CD4-positive, alpha-beta memory T cell (primary cell): ENCODE measurements at regions of chr3 and their contacts with region 1.

Region 1: DNA sequence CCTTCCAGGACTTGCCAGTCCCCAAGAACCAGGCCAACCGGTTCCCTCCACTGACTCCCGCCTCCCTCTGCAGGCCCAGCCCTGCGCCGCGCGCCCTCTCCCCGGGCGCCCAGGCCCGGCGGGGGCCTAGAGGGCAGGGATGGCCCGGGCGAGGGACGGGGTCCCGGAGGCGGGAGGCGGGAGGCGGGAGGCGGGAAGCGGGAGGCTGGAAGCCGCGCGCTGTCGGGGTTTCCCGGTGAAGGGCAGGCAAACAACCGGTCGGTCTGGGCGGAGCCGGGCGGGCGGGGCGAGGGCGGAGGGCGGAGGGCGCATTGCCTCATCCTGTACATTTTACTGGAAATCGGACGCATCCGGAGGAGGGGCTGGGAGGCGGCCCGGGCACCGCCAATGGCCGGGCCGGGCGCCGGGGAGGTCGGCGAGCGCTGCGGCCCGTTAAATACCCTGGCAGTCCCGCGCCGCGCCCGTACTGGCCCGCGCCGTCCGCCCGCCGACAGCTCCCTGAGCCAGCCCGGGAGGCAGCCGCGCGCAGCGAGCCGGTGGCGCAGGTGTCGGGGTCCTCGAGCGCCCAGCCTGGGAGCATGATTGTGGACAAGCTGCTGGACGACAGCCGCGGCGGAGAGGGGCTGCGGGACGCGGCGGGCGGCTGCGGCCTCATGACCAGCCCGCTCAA is at the start of gene NFKBIZ:
- DNase-seq: peak; percentile 89 to 96 (median 91)
- H3K4me3 ChIP-seq: peak within 1 kb of the TSS; percentile 70 to 100
- H3K4me3 Mint-ChIP-seq: peak within 1 kb of the TSS; percentile 93 to 100 (median 98)
- H3K27ac ChIP-seq: peak within 1 kb of the TSS; percentile 99
- H3K27ac Mint-ChIP-seq: peak within 1 kb of the TSS; percentile 97 to 100 (median 99)
- H3K4me1 ChIP-seq: peaks cover 33% of the 10 kb centered on the region
- H3K4me1 Mint-ChIP-seq: peaks cover 26 to 56% (median 35%) of the 10 kb centered on the region in 4 donors
- H3K27me3 ChIP-seq: no peaks in the 10 kb centered on the region
- H3K27me3 Mint-ChIP-seq: no peaks in the 10 kb centered on the region
- total RNA-seq, gene NFKBIZ: 75.9 to 79.5 TPM

Region 2: DNA sequence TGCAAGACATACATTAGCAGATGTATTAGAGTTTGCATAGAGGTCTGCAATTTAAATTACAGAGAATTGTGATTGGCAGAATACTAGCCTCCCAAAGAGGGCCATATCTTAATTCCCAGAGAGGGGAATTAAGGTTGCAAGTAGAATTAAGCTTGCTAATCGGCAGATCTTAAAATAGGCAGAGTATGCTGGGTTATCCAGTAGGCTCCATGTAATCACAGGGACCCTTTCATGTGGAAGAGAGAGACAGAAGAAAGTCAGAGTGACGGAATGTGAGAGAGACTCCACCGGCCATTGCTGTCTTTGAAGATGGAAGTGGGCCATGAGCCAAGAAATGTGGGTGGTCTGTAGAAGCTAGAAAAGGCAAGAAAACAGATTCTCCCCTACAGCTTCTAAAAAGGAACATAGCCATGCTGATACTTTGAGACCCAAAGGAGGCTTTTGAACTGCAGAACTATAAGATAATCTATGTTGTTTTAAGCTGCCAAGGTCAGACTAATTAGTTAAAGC is 567.6 kb before region 1 on chr3:
- CTCF ChIA-PET with region 1: no interaction called
- POLR2A ChIA-PET with region 1: no interaction called
- intact Hi-C with region 1: no loop called
- DNase-seq: no peak
- H3K4me3 ChIP-seq: no peak overlapping the region
- H3K4me3 Mint-ChIP-seq: no peak overlapping the region
- H3K27ac ChIP-seq: no peak overlapping the region
- H3K27ac Mint-ChIP-seq: peak overlapping the region in 1 of 7 donors; percentile 38
- H3K4me1 ChIP-seq: no peaks in the 10 kb centered on the region
- H3K4me1 Mint-ChIP-seq: peaks cover 0 to 1% (median 0%) of the 10 kb centered on the region in 4 donors
- H3K27me3 ChIP-seq: no peaks in the 10 kb centered on the region
- H3K27me3 Mint-ChIP-seq: no peaks in the 10 kb centered on the region

Region 3: DNA sequence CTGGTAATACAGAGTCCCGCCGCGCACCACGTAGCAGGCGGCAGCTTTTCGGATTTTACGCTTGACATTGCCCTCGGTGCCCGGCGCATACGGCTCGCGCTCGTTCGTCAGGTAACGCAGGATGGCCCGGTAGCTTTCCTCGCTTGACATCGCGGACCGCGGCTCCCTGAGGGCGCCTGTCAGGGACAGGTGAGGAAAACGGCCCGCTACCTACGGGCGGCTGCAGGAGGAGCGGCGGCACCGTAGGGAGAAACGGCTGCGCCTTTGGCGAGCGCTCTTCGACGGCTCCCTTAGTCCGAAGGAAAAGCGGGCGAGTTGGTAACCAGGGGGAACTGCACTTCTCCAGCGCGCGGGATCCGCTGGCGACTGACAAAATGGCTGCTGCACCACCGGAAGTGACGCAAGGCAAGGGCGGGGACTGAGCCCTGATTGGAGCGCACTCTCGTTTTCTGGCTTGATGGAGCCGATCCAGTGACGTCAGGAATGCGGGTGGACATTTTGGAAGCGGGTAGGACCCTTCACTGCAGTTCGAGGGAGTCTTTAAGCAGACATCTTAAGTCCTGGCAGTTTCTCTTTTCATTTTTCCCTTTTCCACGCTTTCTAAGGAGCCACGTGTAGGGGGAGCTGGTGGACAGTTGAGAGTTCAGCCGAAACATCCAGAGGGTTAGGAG is 172.3 kb before region 1 on chr3 and contains the start of gene ZBTB11:
- CTCF ChIA-PET with region 1: no interaction called
- POLR2A ChIA-PET with region 1: interaction called, 28 read pairs
- intact Hi-C with region 1: no loop called
- DNase-seq: peak; percentile 99 to 100 (median 99)
- H3K4me3 ChIP-seq: peak within 1 kb of the TSS; percentile 78 to 94
- H3K4me3 Mint-ChIP-seq: peak within 1 kb of the TSS; percentile 92 to 99 (median 96)
- H3K27ac ChIP-seq: peak within 1 kb of the TSS; percentile 98
- H3K27ac Mint-ChIP-seq: peak within 1 kb of the TSS; percentile 97 to 99 (median 98)
- H3K4me1 ChIP-seq: peaks cover 44% of the 10 kb centered on the region
- H3K4me1 Mint-ChIP-seq: peaks cover 23 to 73% (median 41%) of the 10 kb centered on the region in 4 donors
- H3K27me3 ChIP-seq: no peaks in the 10 kb centered on the region
- H3K27me3 Mint-ChIP-seq: peaks cover 0 to 2% of the 10 kb centered on the region in 2 donors
- total RNA-seq, gene ZBTB11: 48.9 to 50.8 TPM

Region 4: GRCh38 chr3:101779047-101779821 is 70.0 kb before region 1 on chr3 and contains the start of gene NXPE3:
- CTCF ChIA-PET with region 1: interaction called, 3 read pairs
- POLR2A ChIA-PET with region 1: interaction called, 29 read pairs
- intact Hi-C with region 1: loop called (anchors 1 kb)
- DNase-seq: peak; percentile 92 to 95 (median 94)
- H3K4me3 ChIP-seq: peak within 1 kb of the TSS; percentile 63 to 90
- H3K4me3 Mint-ChIP-seq: peak within 1 kb of the TSS; percentile 89 to 98 (median 96)
- H3K27ac ChIP-seq: peak within 1 kb of the TSS; percentile 91
- H3K27ac Mint-ChIP-seq: peak within 1 kb of the TSS; percentile 97 to 99 (median 99)
- H3K4me1 ChIP-seq: peaks cover 49% of the 10 kb centered on the region
- H3K4me1 Mint-ChIP-seq: peaks cover 35 to 62% (median 47%) of the 10 kb centered on the region in 4 donors
- H3K27me3 ChIP-seq: no peaks in the 10 kb centered on the region
- H3K27me3 Mint-ChIP-seq: no peaks in the 10 kb centered on the region
- total RNA-seq, gene NXPE3: 35.7 to 37.2 TPM

Region 5: DNA sequence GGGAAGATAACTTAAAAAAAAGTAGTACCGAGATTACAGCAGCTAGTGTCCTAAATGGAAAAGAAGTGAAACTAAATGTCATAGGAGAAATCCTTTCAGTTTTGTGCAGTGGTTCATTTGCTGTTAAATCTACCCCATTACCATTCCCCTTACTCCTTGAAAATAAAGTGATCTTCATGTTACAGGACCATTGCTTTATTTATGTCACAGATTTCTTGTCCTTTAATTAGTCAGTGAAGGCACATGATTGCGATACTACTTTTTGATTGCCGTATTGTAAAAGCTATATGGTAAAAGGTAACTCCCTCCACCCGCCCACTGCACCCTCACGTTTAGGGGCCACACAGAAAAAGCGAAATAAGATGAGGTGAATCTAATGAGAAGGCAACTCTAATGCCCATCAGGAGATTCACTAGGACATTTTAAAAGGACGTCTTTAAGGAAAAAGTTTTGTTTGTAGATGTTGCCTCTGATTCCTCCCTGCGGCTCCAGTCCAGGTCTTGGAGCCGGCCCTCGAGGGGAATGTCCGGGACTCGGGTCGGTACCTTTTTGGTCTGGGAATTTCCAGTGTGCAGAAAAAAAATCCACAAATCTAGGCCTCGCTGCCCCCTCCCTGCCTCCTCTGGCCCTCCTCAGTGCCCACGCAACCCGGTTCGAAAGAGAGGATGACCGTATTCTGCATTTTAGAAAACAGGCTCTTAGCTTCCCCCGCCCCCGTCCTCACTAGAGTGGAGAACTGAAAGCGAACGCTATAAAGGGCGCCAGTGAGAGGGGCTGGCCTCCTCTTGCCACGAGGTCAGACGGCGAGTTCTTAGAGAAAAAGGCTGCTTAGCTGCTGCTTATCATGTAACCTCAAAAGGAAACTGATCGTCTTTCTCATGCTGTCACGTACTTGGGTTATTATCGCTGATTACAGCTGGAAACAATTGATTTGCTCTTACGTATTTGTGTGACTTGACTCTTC is 21.7 kb before region 1 on chr3:
- CTCF ChIA-PET with region 1: interaction called, 10 read pairs
- POLR2A ChIA-PET with region 1: interaction called, 213 read pairs
- intact Hi-C with region 1: loop called (anchors 1 kb)
- DNase-seq: peak; percentile 76 to 92 (median 80)
- H3K4me3 ChIP-seq: peak overlapping the region; percentile 63 to 89
- H3K4me3 Mint-ChIP-seq: peak overlapping the region; percentile 89 to 98 (median 94)
- H3K27ac ChIP-seq: peak overlapping the region; percentile 92
- H3K27ac Mint-ChIP-seq: peak overlapping the region; percentile 96 to 100 (median 98)
- H3K4me1 ChIP-seq: peaks cover 40% of the 10 kb centered on the region
- H3K4me1 Mint-ChIP-seq: peaks cover 35 to 59% (median 44%) of the 10 kb centered on the region in 4 donors
- H3K27me3 ChIP-seq: no peaks in the 10 kb centered on the region
- H3K27me3 Mint-ChIP-seq: no peaks in the 10 kb centered on the region

Region 6: GRCh38 chr3:101868534-101869464 is 19.6 kb after region 1 on chr3:
- CTCF ChIA-PET with region 1: no interaction called
- POLR2A ChIA-PET with region 1: interaction called, 10 read pairs
- intact Hi-C with region 1: no loop called
- DNase-seq: no peak
- H3K4me3 ChIP-seq: no peak overlapping the region
- H3K4me3 Mint-ChIP-seq: no peak overlapping the region
- H3K27ac ChIP-seq: no peak overlapping the region
- H3K27ac Mint-ChIP-seq: peak overlapping the region in 1 of 7 donors; percentile 50
- H3K4me1 ChIP-seq: no peaks in the 10 kb centered on the region
- H3K4me1 Mint-ChIP-seq: peaks cover 0 to 3% (median 0%) of the 10 kb centered on the region in 4 donors
- H3K27me3 ChIP-seq: no peaks in the 10 kb centered on the region
- H3K27me3 Mint-ChIP-seq: no peaks in the 10 kb centered on the region

Region 7: GRCh38 chr3:102057781-102058421 is 208.7 kb after region 1 on chr3:
- CTCF ChIA-PET with region 1: no interaction called
- POLR2A ChIA-PET with region 1: interaction called, 7 read pairs
- intact Hi-C with region 1: loop called (anchors 5 kb)
- DNase-seq: peak; percentile 64 to 80 (median 71)
- H3K4me3 ChIP-seq: no peak overlapping the region
- H3K4me3 Mint-ChIP-seq: peak overlapping the region in 7 of 8 donors; percentile 21 to 71 (median 48)
- H3K27ac ChIP-seq: peak overlapping the region; percentile 10
- H3K27ac Mint-ChIP-seq: peak overlapping the region; percentile 15 to 88 (median 44)
- H3K4me1 ChIP-seq: peaks cover 39% of the 10 kb centered on the region
- H3K4me1 Mint-ChIP-seq: peaks cover 28 to 35% (median 31%) of the 10 kb centered on the region in 4 donors
- H3K27me3 ChIP-seq: no peaks in the 10 kb centered on the region
- H3K27me3 Mint-ChIP-seq: no peaks in the 10 kb centered on the region